Pancreas (tissue), 10 donors: ENCODE measurements at regions of chr9 and their contacts with region 1.

Region 1: DNA sequence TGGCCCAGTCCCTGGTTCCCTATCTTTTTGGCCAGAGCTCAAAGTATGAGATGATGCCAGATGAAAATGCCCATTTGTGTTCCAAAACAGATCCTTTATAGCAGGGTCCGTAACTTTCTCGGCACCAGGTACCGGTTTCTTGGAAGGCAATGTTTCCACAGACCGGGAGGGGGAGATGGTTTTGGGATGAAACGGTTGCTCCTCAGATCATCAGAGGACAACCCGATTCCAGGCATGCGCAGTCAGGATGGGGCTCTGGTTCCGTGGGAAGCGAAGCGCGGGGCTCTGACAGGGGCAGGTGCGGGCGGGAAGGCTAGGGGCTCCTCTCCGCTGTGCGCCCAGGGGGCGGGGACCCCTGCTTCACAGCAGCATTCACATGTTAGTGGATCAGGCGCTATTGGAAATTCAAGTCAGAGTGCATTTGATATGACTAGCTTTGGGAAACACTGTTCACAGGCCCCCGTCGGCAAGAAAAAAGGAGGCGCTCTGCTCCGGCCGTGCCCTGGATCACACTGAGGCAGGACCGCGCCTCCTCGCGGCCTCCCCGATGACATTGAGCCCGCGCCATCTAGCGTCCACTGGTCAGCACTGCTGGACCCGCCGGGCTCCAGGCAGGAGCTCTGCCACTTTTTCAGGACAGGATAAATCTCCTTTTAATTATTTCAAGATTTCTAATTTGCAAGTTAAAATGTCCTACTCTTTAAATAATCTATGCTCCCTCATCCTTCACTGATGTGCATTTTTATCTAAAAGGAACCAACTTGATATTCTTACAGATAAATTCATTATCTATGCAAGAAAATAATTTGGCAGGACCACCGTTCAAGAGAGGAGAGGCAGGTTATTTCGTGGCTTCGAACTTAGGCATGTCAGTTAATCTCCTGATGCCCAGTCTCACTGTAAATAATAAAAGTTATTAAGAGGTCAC is 190.0 kb downstream of the FANCC start:
- DNase-seq: peak; percentile 77 to 95 (median 87)
- ATAC-seq: peak; percentile 74 to 93 (median 88)
- H3K4me3 ChIP-seq: peak overlapping the region in 3 of 4 donors; percentile 5 to 39 (median 14)
- H3K27ac ChIP-seq: no peak overlapping the region
- H3K4me1 ChIP-seq: peaks cover 12 to 16% (median 15%) of the 10 kb centered on the region in 3 donors
- H3K27me3 ChIP-seq: no peaks in the 10 kb centered on the region
- CTCF ChIP-seq: peak; percentile 91 to 98 (median 94)

Region 2: DNA sequence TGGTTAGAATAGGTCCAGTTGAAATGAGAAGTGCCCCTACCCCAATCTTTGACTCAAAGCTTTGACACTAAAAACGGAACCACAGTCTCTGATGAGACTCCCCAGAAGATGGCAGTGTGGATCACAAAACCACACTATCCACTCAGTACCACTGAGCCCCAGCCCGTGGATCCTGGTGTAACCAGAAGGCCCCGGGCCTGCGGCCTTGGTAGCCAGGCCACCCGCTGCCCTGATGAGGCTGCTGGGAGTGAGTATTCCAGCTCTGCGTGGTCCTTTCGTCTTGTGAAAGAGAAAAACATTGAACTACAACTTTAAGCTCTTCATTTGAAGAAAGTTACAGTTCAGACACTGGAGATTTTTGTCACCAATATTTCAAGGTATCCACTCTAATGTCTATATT is 446.0 kb before region 1 on chr9:
- intact Hi-C with region 1: loop called in 1 of 3 experiments (anchors 5 kb)
- DNase-seq: peak; percentile 68 to 90 (median 77)
- ATAC-seq: peak; percentile 98 to 100 (median 99)
- H3K4me3 ChIP-seq: no peak overlapping the region
- H3K27ac ChIP-seq: no peak overlapping the region
- H3K4me1 ChIP-seq: no peaks in the 10 kb centered on the region
- H3K27me3 ChIP-seq: no peaks in the 10 kb centered on the region
- CTCF ChIP-seq: peak in 3 of 4 donors; percentile 46 to 60 (median 53)

Region 3: DNA sequence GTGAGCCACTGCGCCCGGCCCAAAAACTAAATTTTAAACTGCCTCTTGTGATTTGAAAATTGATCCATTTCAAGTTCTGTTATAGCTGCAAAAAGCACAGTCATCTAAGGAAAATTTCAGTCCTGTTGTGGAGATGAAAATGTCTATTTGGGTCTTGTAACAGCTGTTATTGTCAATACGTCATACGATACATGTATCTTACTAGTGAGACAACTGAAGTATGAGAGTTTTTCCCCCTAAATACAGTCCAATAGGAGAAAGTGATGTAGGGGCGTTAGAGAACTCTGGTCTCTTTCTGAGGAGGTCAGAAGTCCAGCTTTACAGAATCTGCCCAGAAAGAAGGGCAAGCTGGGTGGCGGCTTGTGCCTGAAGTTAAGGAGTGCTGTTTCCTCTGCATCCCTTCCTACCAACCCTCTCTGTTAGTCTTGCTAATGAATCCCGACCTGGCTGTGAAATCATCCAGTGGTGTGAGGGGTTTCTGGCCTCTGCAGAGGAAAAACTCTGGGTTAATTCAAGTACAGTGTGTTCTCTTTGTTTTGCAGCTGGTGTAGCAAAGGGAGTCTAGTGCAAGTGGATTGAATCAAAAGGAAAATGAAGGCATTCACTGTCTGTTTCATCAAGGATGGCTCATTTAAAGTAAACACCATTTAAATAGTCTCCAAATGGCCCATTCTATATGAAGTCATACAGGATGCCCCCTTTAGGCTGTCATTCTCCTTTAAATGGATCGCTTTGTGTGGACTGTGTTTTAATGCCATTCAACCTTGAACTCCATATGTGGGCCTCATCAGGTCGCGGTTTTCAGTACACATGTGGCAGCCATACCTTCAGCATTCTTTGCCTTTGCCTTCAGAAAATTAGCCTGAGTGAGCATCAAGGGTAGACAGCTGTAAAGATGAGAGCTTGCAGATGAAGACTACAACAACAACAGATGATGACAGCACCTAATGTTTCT is 342.0 kb before region 1 on chr9:
- intact Hi-C with region 1: loop called in 1 of 3 experiments (anchors 5 kb)
- DNase-seq: no peak
- ATAC-seq: no peak
- H3K4me3 ChIP-seq: no peak overlapping the region
- H3K27ac ChIP-seq: no peak overlapping the region
- H3K4me1 ChIP-seq: peaks cover 0 to 6% (median 5%) of the 10 kb centered on the region in 3 donors
- H3K27me3 ChIP-seq: no peaks in the 10 kb centered on the region
- CTCF ChIP-seq: no peak

Region 4: DNA sequence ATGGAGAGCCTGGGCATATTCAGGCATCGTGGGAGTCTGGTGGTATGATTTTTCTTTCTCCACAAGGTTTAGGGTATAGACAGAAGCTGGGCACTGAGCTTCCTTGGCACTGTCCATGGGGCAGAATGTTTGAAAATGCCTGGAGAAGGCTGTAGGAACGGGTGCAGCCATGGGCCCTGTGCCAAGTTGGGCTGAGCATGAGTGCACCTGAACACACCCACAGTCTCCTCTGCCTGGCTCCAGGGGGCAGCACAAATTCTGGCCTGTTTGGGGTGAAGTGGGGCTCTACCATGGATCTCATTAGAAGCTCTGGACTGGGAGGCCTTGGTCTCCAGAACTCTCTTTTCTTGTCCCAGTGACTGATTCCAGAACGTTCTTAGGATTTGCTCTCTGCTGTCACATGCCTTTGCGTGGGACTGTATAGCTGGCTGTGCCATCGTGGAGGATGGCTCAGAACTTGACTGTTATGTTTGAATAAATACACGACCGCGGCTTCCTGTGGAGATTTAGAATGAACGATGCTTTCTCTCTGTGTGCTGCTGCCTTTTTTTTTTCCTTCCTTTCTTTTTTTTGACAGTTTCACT is 39.8 kb before region 1 on chr9:
- intact Hi-C with region 1: loop called in 1 of 3 experiments (anchors 5 kb)
- DNase-seq: peak in 5 of 6 donors; percentile 67 to 88 (median 78)
- ATAC-seq: peak in 3 of 4 donors; percentile 11 to 36 (median 36)
- H3K4me3 ChIP-seq: no peak overlapping the region
- H3K27ac ChIP-seq: peak overlapping the region in 1 of 4 donors; percentile 13
- H3K4me1 ChIP-seq: peaks cover 16 to 32% (median 23%) of the 10 kb centered on the region in 3 donors
- H3K27me3 ChIP-seq: no peaks in the 10 kb centered on the region
- CTCF ChIP-seq: no peak